ENCODE measurements at regions of chr18 and their contacts with region 1.

Region 1: GRCh38 chr18:50961974-50962373 is 5.9 kb upstream of the ELAC1 start:
- DNase-seq: no peak
- H3K4me3 ChIP-seq: no peak overlapping the region
- H3K27ac ChIP-seq: no peak overlapping the region
- H3K4me1 ChIP-seq: no peaks in the 10 kb centered on the region
- H3K27me3 ChIP-seq: no peaks in the 10 kb centered on the region
- CTCF ChIP-seq: no peak
- EP300 ChIP-seq: no peak
- POLR2A ChIP-seq: no peak

Region 2: GRCh38 chr18:50748243-50749229 is 213.4 kb before region 1 on chr18:
- intact Hi-C with region 1: no loop called
- DNase-seq: no peak
- H3K4me3 ChIP-seq: no peak overlapping the region
- H3K27ac ChIP-seq: no peak overlapping the region
- H3K4me1 ChIP-seq: no peaks in the 10 kb centered on the region
- H3K27me3 ChIP-seq: no peaks in the 10 kb centered on the region
- CTCF ChIP-seq: no peak
- EP300 ChIP-seq: no peak
- POLR2A ChIP-seq: no peak

Region 3: DNA sequence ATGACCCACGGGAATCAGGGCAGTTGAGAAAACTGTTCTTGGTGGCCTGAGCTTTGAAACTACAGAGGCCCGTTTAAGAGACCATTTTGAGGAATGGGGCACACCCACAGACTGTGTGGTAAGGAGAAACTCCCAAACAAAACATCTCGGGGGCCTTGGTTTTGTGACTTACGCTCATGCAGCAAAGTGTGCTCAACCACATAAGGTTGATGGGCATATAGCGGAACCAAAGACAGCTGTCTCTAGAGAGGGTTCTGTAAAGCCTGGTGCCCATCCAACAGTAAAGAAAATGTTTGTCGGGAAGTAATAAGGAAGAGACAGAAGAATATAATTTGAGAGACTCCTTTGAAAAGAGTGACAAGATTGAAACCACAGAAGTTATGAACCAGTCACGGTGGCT is 147.6 kb before region 1 on chr18:
- intact Hi-C with region 1: no loop called
- DNase-seq: no peak
- H3K4me3 ChIP-seq: no peak overlapping the region
- H3K27ac ChIP-seq: no peak overlapping the region
- H3K4me1 ChIP-seq: peaks cover 5% of the 10 kb centered on the region
- H3K27me3 ChIP-seq: no peaks in the 10 kb centered on the region
- CTCF ChIP-seq: no peak
- EP300 ChIP-seq: no peak
- POLR2A ChIP-seq: no peak

Region 4: GRCh38 chr18:50878345-50879301 is 83.4 kb before region 1 on chr18 and contains the start of gene ME2:
- intact Hi-C with region 1: loop called in 1 of 4 experiments (anchors 5 kb)
- DNase-seq: peak; percentile 87 to 96 (median 90)
- H3K4me3 ChIP-seq: peak within 1 kb of the TSS; percentile 89
- H3K27ac ChIP-seq: peak within 1 kb of the TSS; percentile 89 to 91
- H3K4me1 ChIP-seq: peaks cover 2% of the 10 kb centered on the region
- H3K27me3 ChIP-seq: no peaks in the 10 kb centered on the region
- CTCF ChIP-seq: no peak
- EP300 ChIP-seq: no peak
- POLR2A ChIP-seq: peak; percentile 78
- total RNA-seq, gene ME2: 25.1 to 39.3 (median 31.8) TPM

Region 5: GRCh38 chr18:51128533-51128932 is 166.6 kb after region 1 on chr18:
- intact Hi-C with region 1: no loop called
- DNase-seq: no peak
- H3K4me3 ChIP-seq: no peak overlapping the region
- H3K27ac ChIP-seq: no peak overlapping the region
- H3K4me1 ChIP-seq: no peaks in the 10 kb centered on the region
- H3K27me3 ChIP-seq: no peaks in the 10 kb centered on the region
- CTCF ChIP-seq: no peak
- EP300 ChIP-seq: no peak
- POLR2A ChIP-seq: no peak